H1 (cell line): ENCODE measurements at regions of chr14 and their contacts with region 1.

Region 1: GRCh38 chr14:105045710-105046326 is 19.4 kb downstream of the GPR132 start:
- DNase-seq: peak in 1 of 2 experiments; percentile 98
- H3K4me3 ChIP-seq: no peak overlapping the region
- H3K27ac ChIP-seq: no peak overlapping the region
- H3K4me1 ChIP-seq: peaks cover 0 to 2% (median 0%) of the 10 kb centered on the region in 4 experiments; a peak in 1 of 7 replicates
- H3K27me3 ChIP-seq: peaks cover 0 to 8% (median 7%) of the 10 kb centered on the region in 4 experiments; a peak in 4 of 7 replicates
- CTCF ChIP-seq: peak; percentile 99 to 100 (median 99)
- EP300 ChIP-seq: peak in 1 of 2 experiments; percentile 39; a peak in 1 of 3 replicates
- POLR2A ChIP-seq: no peak
- RAD21 ChIP-seq: peak; percentile 89 to 98

Region 2: GRCh38 chr14:104933746-104934733 is 111.8 kb before region 1 on chr14:
- CTCF ChIA-PET with region 1: interaction called, 21 read pairs
- POLR2A ChIA-PET with region 1: no interaction called
- DNase-seq: no peak
- H3K4me3 ChIP-seq: peak overlapping the region; percentile 11 to 51 (median 27); a peak in 6 of 8 replicates
- H3K27ac ChIP-seq: no peak overlapping the region
- H3K4me1 ChIP-seq: peaks cover 0 to 12% (median 8%) of the 10 kb centered on the region in 4 experiments; a peak in 5 of 7 replicates
- H3K27me3 ChIP-seq: peaks cover 27 to 83% (median 57%) of the 10 kb centered on the region in 4 experiments
- CTCF ChIP-seq: no peak
- EP300 ChIP-seq: no peak
- POLR2A ChIP-seq: no peak
- RAD21 ChIP-seq: no peak

Region 3: DNA sequence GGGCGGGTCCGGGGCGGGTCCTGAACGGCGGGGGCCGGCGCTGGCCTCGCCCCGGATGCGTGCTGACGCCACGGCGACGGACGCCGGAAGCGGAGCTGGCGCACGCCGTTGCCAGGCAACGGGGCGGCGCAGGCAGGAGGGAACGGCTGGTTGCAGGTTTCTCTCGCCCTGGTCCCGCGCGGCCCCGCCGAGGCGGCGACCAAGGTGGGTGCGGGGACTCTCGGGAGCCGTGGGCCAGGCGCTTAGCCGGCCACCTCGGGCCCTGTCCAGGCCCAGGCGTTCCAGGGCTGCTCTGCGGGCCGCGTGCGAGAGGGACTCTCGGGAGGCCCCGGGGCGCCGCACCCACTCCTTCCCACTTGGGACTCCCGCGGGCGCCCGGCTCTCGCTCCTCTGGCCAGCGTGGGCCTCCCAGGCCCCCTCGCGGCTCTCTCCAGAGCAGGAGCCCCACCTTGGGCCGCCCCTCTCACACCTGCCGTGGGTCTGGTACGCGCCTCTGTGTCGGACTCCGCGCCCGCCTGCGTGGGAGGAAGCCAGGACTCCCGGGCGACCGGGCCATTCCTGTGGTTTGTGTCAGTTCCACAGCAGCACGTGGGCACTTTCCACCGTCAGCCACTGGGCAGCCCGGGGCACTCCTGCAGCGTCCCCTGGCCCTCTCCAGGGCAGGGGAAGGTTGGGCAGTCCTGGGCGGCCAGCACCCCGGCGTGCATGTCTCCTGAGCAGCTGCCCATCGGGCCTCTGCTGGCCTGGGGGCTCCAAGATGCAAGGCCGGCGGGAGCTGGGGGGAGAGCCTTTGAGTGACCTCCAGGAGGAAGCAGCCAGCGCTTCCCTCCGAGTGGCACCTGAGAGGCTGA is 59.9 kb before region 1 on chr14 and contains the start of gene CLBA1:
- CTCF ChIA-PET with region 1: interaction called, 17 read pairs
- POLR2A ChIA-PET with region 1: interaction called, 3 read pairs
- DNase-seq: peak in 1 of 2 experiments; percentile 84
- H3K4me3 ChIP-seq: peak within 1 kb of the TSS; percentile 52 to 78 (median 56)
- H3K27ac ChIP-seq: no peak within 1 kb of the TSS
- H3K4me1 ChIP-seq: peaks cover 0 to 7% (median 2%) of the 10 kb centered on the region in 4 experiments; a peak in 4 of 7 replicates
- H3K27me3 ChIP-seq: peaks cover 0 to 4% (median under 1%) of the 10 kb centered on the region in 4 experiments; a peak in 3 of 7 replicates
- CTCF ChIP-seq: no peak
- EP300 ChIP-seq: no peak
- POLR2A ChIP-seq: no peak
- RAD21 ChIP-seq: no peak
- total RNA-seq, gene CLBA1: 2.1 and 2.4 TPM in 2 replicates

Region 4: DNA sequence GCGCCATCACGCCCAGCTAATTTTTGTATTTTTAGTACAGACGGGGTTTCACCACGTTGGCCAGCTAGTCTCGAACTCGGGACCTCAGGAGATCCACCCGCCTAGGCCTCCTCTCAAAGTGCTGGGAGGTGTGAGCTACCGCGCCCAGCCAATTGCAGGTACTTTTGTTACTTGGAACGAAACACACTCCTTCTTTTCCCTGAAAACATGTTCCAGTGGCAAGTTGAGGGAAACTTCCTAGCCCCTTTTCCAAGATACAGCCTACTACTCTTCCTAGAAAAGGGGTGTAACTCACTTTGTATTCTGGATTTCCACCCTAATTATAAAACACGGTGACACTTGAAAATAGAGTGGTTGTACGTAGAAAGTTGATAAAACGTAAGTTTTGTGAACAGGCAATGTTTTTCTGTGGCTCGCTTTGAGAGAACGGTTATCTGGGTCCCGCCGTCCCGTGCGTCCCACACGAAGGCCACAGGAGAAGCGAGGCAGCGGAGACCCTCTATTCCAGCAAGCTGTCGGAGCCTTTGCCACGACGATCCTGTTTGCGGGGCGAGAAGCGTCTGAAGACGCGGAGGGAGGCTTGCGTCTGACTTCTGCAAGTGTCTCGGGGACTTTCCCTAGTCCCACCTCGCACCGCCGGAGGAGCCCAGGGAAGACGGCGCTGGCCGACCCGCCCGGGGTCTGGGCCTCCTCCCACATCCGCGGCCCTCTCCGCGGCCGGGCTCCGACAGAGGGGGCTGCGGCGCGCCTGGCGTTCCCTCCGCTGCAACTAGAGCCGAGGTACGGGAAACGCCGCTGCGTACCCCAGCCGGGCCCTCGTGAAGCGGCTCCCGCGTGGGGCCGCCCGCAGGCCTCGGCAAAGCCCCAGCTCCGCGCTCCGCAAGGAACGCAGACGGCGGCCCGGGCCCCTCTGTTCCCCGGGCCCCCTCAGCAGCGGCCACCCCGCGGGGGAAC is 25.7 kb before region 1 on chr14:
- CTCF ChIA-PET with region 1: interaction called, 15 read pairs
- POLR2A ChIA-PET with region 1: interaction called, 4 read pairs
- DNase-seq: peak in 1 of 2 experiments; percentile 59
- H3K4me3 ChIP-seq: peak overlapping the region; percentile 77 to 89 (median 84)
- H3K27ac ChIP-seq: peak overlapping the region; percentile 82; the same call in 1 of the 2 replicates
- H3K4me1 ChIP-seq: peaks cover 2 to 13% (median 11%) of the 10 kb centered on the region in 4 experiments; a peak in 6 of 7 replicates
- H3K27me3 ChIP-seq: no peaks in the 10 kb centered on the region
- CTCF ChIP-seq: no peak; a peak in 1 of 4 replicates
- EP300 ChIP-seq: no peak
- POLR2A ChIP-seq: no peak
- RAD21 ChIP-seq: no peak

Region 5: DNA sequence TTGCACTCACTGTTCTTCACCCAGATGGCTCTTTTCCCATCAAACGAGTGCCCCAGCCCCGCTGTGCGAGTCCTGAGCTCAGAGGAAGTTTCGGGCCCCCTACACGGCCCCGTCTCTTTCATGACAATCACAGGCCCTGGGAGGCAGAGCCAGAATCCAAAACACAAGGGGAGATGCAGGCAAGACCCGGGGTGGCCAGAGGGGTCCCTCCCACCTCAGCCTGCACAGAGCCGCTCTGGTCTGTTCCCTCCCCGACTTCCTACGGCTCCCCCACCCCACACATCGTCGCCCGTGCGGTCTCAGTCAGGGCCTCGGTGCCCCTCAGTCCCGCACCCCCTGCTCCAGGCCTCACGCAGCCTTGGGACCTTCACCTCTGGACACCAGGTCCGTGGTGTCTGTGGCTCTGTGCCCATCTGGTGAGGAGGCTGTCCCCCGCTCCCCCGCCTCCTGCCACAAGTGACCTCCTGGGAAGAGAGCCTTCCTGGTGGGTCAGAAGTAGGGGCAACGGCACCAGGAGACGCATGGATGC is 10.5 kb after region 1 on chr14:
- CTCF ChIA-PET with region 1: interaction called, 30 read pairs
- POLR2A ChIA-PET with region 1: no interaction called
- DNase-seq: no peak
- H3K4me3 ChIP-seq: peak overlapping the region in 3 of 4 experiments; percentile 14 to 51 (median 14); a peak in 2 of 8 replicates
- H3K27ac ChIP-seq: no peak overlapping the region
- H3K4me1 ChIP-seq: peaks cover 0 to 21% (median 14%) of the 10 kb centered on the region in 4 experiments; a peak in 6 of 7 replicates
- H3K27me3 ChIP-seq: peaks cover 2 to 24% (median 19%) of the 10 kb centered on the region in 4 experiments; a peak in 5 of 7 replicates
- CTCF ChIP-seq: no peak
- EP300 ChIP-seq: no peak
- POLR2A ChIP-seq: no peak
- RAD21 ChIP-seq: no peak

Region 6: GRCh38 chr14:105069871-105070759 is 24.3 kb after region 1 on chr14:
- CTCF ChIA-PET with region 1: interaction called, 25 read pairs
- POLR2A ChIA-PET with region 1: no interaction called
- DNase-seq: no peak
- H3K4me3 ChIP-seq: no peak overlapping the region
- H3K27ac ChIP-seq: no peak overlapping the region
- H3K4me1 ChIP-seq: peaks cover 0 to 8% (median 2%) of the 10 kb centered on the region in 4 experiments; a peak in 6 of 7 replicates
- H3K27me3 ChIP-seq: no peaks in the 10 kb centered on the region
- CTCF ChIP-seq: no peak
- EP300 ChIP-seq: no peak
- POLR2A ChIP-seq: no peak
- RAD21 ChIP-seq: no peak

Region 7: GRCh38 chr14:105086833-105087307 is 41.1 kb after region 1 on chr14:
- CTCF ChIA-PET with region 1: interaction called, 11 read pairs
- POLR2A ChIA-PET with region 1: no interaction called
- DNase-seq: peak; percentile 56 to 89
- H3K4me3 ChIP-seq: peak overlapping the region; percentile 36 to 72 (median 50)
- H3K27ac ChIP-seq: no peak overlapping the region
- H3K4me1 ChIP-seq: peaks cover 0 to 10% (median 5%) of the 10 kb centered on the region in 4 experiments; a peak in 3 of 7 replicates
- H3K27me3 ChIP-seq: peaks cover 12 to 44% (median 34%) of the 10 kb centered on the region in 4 experiments
- CTCF ChIP-seq: peak in 2 of 3 experiments; percentile 79 to 93; a peak in 3 of 4 replicates
- EP300 ChIP-seq: peak in 1 of 2 experiments; percentile 41; a peak in 1 of 3 replicates
- POLR2A ChIP-seq: no peak
- RAD21 ChIP-seq: peak; percentile 72 to 82